GM18951 (cell line): ENCODE measurements at regions of chr16 and their contacts with region 1.

Region 1: GRCh38 chr16:84754353-84754856 is 54.6 kb downstream of the USP10 start:
- POLR2A ChIP-seq: no peak

Region 2: DNA sequence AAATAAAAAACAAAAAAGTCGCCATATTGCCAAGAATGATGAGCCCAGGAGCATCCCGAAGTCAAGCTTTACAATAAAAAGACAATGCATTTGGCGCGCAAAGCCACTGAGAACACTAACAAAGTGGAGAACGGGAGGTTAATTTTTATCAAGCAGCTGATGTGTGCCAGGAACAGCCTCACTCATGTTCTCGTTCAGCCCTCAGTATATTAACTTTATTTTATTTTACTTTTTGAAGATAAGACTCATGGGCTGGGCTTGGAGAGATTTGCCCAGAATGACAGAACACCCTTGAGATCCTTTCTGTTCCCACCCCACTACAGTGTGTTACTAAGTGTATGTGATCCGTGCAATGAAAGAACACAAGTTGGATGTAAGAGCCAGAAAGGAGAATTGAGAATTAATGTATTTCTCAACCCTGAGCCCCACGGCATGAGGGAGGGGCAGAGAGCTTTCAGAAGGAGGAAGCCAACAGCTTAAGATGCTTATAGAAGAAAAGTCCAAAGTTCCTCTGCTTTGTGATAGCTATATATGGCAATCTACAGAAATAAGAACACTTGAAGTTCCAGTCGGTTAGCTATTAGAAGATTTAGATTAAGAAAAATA is 184.9 kb before region 1 on chr16:
- in situ Hi-C with region 1: no loop called
- POLR2A ChIP-seq: no peak

Region 3: DNA sequence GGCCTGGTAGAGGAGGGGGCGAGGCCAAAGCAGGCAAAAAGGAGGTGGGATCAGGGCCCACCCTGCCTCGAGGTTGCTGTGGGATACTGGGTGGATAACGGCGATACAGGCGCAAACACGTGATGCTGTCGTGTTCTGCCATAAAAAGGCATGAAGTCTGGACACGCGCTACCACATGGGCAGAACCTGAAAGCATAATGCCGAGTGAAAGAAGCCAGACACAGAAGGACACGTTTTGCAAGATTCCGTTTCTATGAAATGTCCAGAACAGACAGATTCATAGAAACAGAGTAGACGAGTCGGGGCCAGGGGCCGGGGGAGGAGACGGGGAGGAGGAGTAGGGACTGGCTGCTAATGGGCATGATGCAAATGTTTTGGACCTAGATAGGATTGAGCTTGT is 213.4 kb after region 1 on chr16:
- in situ Hi-C with region 1: loop called (anchors 10 kb)
- POLR2A ChIP-seq: no peak